ENCODE measurements at regions of chr10 and their contacts with region 1.

Region 1: GRCh38 chr10:123559066-123559822 is 106.9 kb upstream of the GPR26 start:
- DNase-seq: peak; percentile 55 to 74
- H3K4me3 ChIP-seq: no peak overlapping the region
- H3K27ac ChIP-seq: no peak overlapping the region
- H3K4me1 ChIP-seq: peaks cover 0 to 3% (median 0%) of the 10 kb centered on the region in 4 donors
- H3K27me3 ChIP-seq: peaks cover 0 to 42% of the 10 kb centered on the region in 2 donors
- CTCF ChIP-seq: peak; percentile 93 to 97

Region 2: GRCh38 chr10:123045961-123046731 is 513.1 kb before region 1 on chr10:
- intact Hi-C with region 1: loop called (anchors 5 kb)
- DNase-seq: no peak
- H3K4me3 ChIP-seq: no peak overlapping the region
- H3K27ac ChIP-seq: no peak overlapping the region
- H3K4me1 ChIP-seq: no peaks in the 10 kb centered on the region
- H3K27me3 ChIP-seq: no peaks in the 10 kb centered on the region
- CTCF ChIP-seq: no peak

Region 3: GRCh38 chr10:123132576-123133477 is 426.4 kb before region 1 on chr10:
- intact Hi-C with region 1: loop called (anchors 2 kb)
- DNase-seq: peak; percentile 82 to 86
- H3K4me3 ChIP-seq: peak overlapping the region in 1 of 2 donors; percentile 10
- H3K27ac ChIP-seq: no peak overlapping the region
- H3K4me1 ChIP-seq: peaks cover 0 to 51% (median 43%) of the 10 kb centered on the region in 4 donors
- H3K27me3 ChIP-seq: peaks cover 7 to 98% of the 10 kb centered on the region in 2 donors
- CTCF ChIP-seq: peak; percentile 79 to 91

Measured in tibial artery (tissue), 4 donors.